Gastrocnemius medialis (tissue), 4 donors: ENCODE measurements at regions of chr10 and their contacts with region 1.

Region 1: GRCh38 chr10:4849555-4850242 is 23.7 kb downstream of the AKR1E2 start:
- DNase-seq: peak; percentile 78 to 85
- ATAC-seq: peak; percentile 96 to 97
- H3K4me3 ChIP-seq: peak overlapping the region in 1 of 4 donors; percentile 9
- H3K27ac ChIP-seq: peak overlapping the region; percentile 10 to 51 (median 18)
- H3K4me1 ChIP-seq: peaks cover 4 to 9% of the 10 kb centered on the region in 2 donors
- H3K27me3 ChIP-seq: no peaks in the 10 kb centered on the region
- CTCF ChIP-seq: peak; percentile 96 to 99 (median 98)
- POLR2A ChIP-seq: no peak

Region 2: GRCh38 chr10:4437646-4438190 is 412.0 kb before region 1 on chr10:
- in situ Hi-C with region 1: no loop called
- intact Hi-C with region 1: no loop called
- DNase-seq: no peak
- ATAC-seq: no peak
- H3K4me3 ChIP-seq: no peak overlapping the region
- H3K27ac ChIP-seq: no peak overlapping the region
- H3K4me1 ChIP-seq: no peaks in the 10 kb centered on the region
- H3K27me3 ChIP-seq: no peaks in the 10 kb centered on the region
- CTCF ChIP-seq: no peak
- POLR2A ChIP-seq: no peak

Region 3: GRCh38 chr10:4941540-4942330 is 92.0 kb after region 1 on chr10:
- in situ Hi-C with region 1: no loop called
- intact Hi-C with region 1: loop called (anchors 2 kb)
- DNase-seq: no peak
- ATAC-seq: peak; percentile 26 to 47
- H3K4me3 ChIP-seq: no peak overlapping the region
- H3K27ac ChIP-seq: peak overlapping the region; percentile 67 to 70 (median 68)
- H3K4me1 ChIP-seq: peaks cover 30 to 37% of the 10 kb centered on the region in 2 donors
- H3K27me3 ChIP-seq: no peaks in the 10 kb centered on the region
- CTCF ChIP-seq: no peak
- POLR2A ChIP-seq: no peak

Region 4: DNA sequence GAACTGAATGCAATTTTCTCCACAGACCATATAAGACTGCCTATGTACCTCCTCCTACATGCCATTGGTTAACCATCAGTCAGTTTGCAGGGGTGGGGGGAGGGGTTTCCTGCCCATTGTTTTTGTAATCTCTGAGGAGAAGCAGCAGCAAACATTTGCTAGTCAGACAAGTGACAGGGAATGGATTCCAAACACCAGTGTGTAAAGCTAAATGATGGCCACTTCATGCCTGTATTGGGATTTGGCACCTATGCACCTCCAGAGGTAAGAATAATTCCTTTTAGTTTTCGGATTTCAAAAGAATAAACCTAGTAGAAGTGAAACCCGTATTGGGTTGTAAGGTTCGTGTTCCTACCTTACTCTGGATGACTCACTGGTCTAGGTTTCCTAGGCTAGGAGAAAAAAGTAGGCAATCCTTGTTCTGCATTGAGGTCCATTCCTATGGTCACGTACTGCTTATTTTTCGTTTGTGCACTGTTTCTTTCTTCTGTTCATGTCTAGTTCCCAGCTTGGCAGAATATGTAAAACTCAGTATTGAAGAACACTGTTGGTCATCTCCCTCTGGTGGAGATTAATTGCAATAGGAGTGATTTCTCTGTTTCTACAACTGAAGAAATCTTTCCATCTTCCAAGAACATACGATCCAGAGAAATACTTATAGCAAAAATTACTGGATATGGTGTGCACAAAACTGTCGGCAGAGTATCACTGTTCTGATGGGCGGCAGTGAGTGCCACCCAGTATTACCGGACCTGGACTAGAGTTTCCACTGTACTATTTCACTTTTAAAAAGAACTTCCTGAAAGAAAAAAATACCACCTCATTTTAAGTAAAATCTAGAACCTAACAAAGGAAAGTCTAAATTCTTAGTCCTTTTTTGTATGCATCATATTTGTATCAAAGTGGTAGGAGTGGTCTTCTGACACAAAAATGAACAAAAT is 244.8 kb after region 1 on chr10 and contains the start of gene AKR1C3:
- in situ Hi-C with region 1: loop called (anchors 5 to 10 kb)
- intact Hi-C with region 1: loop called (anchors 1 kb)
- DNase-seq: no peak
- ATAC-seq: peak; percentile 91 to 94
- H3K4me3 ChIP-seq: peak within 1 kb of the TSS; percentile 59 to 86 (median 62)
- H3K27ac ChIP-seq: peak within 1 kb of the TSS; percentile 65 to 83 (median 76)
- H3K4me1 ChIP-seq: peaks cover 8 to 18% of the 10 kb centered on the region in 2 donors
- H3K27me3 ChIP-seq: no peaks in the 10 kb centered on the region
- CTCF ChIP-seq: peak; percentile 65 to 76 (median 72)
- POLR2A ChIP-seq: peak; percentile 19 to 48
- total RNA-seq, gene AKR1C3: 48.3 to 293 (median 197) TPM

Region 5: DNA sequence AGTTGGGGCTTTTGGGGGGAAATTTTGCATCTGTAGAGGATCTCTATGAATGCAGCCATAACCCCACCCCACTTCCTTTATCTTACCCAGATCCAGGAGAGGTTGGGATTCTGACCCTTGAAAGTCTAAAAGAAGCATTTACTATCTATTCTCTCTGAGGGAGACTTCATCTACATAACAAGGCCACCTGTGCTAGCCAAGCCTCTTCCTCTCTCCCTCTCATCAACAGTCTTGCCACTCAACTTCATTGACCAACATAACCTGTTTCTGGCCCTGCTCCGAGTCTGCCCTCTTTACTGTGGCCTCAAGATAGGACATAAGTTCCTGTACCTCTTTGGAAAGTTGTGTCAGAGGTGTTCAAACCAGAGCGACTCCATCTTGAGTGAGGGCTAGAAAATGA is 535.5 kb after region 1 on chr10:
- in situ Hi-C with region 1: loop called (anchors 10 to 25 kb)
- intact Hi-C with region 1: no loop called
- DNase-seq: no peak
- ATAC-seq: no peak
- H3K4me3 ChIP-seq: no peak overlapping the region
- H3K27ac ChIP-seq: no peak overlapping the region
- H3K4me1 ChIP-seq: no peaks in the 10 kb centered on the region
- H3K27me3 ChIP-seq: no peaks in the 10 kb centered on the region
- CTCF ChIP-seq: no peak
- POLR2A ChIP-seq: no peak

Region 6: GRCh38 chr10:5434017-5434753 is 584.5 kb after region 1 on chr10:
- in situ Hi-C with region 1: loop called in 1 of 4 experiments (anchors 10 kb)
- intact Hi-C with region 1: loop called (anchors 2 kb)
- DNase-seq: no peak
- ATAC-seq: peak in 1 of 2 donors; percentile 74
- H3K4me3 ChIP-seq: no peak overlapping the region
- H3K27ac ChIP-seq: peak overlapping the region in 3 of 4 donors; percentile 26 to 39 (median 29)
- H3K4me1 ChIP-seq: peaks cover 12 to 21% of the 10 kb centered on the region in 2 donors
- H3K27me3 ChIP-seq: no peaks in the 10 kb centered on the region
- CTCF ChIP-seq: peak; percentile 32 to 73 (median 52)
- POLR2A ChIP-seq: no peak